ENCODE measurements at regions of chr17 and their contacts with region 1.

Region 1: DNA sequence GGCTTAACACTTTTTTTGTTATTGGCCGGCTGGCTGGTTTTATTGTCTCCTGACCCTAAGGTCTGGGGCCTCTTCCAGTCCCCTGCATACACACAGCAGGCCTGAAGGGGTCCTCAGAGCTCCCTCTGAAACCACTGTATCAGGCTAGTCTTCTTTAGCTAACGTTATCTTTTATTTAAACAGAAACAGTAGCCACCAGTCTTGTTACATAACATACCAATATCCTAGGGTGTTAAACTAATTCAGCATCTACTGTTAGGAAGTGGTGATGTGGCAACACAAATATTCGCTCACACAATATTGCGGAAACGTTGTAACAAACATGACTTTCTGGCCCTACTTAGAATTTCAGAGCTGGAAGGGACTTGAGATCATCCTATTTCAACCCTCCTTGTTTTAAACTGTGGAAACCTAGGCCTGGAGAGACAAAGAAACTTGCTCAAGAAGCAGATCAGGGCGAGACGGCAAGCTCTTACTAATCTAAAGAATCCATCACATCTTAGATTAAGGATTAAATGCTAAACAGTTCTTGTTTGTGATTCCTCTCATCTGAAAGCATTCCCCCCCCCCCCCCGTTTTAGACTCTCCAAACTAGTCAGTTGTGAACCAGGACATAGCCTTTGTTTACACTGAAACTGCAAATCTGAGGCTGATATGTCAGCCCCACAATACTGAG is 1.7 kb upstream of the YPEL2 start:
- DNase-seq: peak; percentile 49
- H3K4me3 ChIP-seq: no peak overlapping the region
- H3K27ac ChIP-seq: no peak overlapping the region
- H3K27me3 ChIP-seq: peaks cover 18% of the 10 kb centered on the region
- CTCF ChIP-seq: peak; percentile 96

Region 2: DNA sequence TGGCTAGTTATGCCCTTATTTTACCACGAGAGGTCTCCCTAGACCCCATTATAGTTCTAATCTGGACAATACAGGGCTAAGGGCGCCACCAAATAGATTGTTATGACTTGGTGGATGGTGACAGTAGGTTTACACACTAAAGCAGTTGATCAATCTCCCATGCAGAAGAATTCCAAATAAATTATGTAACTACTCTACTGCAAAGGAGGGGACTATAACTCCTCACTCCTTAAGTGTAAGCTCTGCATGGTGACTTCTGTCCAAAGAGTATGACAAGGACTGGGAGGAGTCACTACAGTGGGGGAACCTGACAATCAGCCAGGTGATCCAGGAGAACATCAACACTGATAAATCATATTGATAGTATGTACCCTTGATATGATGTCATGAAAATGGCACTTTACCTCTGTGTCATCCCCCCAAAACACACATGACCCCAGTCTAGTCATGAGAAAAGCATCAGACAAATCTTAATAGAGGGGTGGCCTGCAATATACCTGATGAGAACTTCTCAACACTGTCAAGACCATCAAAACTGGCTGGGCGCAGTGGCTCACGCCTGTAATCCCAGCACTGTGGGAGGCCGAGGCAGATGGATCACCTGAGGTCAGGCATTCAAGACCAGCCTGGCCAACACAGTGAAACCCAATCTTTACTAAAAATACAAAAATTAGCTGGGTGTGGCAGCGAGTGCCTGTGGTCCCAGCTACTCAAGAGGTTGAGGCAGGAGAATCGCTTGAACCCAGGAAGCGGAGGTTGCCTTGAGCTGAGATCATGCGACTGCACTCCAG is 18.5 kb before region 1 on chr17:
- CTCF ChIA-PET with region 1: interaction called, 17 read pairs
- POLR2A ChIA-PET with region 1: no interaction called
- DNase-seq: no peak
- H3K4me3 ChIP-seq: no peak overlapping the region
- H3K27ac ChIP-seq: no peak overlapping the region
- H3K27me3 ChIP-seq: peaks cover 2% of the 10 kb centered on the region
- CTCF ChIP-seq: peak; percentile 81

Region 3: DNA sequence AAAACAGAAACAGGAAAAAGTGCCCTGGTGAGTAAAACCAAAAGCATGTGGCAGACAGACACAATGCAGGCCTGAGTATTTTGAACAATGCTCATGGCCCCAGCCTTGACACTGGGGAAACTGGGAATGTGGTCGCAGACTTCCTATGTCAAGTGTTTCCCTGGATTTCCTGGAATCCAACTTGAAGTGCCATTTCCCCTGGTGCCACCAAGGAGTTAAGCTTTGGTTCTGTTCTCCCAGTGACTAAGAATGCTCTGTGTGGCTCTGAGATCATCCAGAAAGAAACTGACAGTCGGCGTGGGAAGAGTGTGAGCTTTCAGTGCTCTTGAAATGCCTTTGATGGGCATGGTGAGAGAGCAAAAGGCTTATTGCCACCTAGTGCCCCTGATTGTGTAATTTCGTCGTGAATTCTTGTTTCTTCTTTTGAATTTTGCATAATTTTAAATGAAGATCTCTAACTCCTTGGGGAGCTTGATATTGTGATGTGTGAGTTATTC is 97.7 kb after region 1 on chr17:
- CTCF ChIA-PET with region 1: interaction called, 43 read pairs
- POLR2A ChIA-PET with region 1: interaction called, 4 read pairs
- DNase-seq: no peak
- H3K4me3 ChIP-seq: no peak overlapping the region
- H3K27ac ChIP-seq: peak overlapping the region; percentile 59
- H3K27me3 ChIP-seq: no peaks in the 10 kb centered on the region
- CTCF ChIP-seq: no peak

Region 4: DNA sequence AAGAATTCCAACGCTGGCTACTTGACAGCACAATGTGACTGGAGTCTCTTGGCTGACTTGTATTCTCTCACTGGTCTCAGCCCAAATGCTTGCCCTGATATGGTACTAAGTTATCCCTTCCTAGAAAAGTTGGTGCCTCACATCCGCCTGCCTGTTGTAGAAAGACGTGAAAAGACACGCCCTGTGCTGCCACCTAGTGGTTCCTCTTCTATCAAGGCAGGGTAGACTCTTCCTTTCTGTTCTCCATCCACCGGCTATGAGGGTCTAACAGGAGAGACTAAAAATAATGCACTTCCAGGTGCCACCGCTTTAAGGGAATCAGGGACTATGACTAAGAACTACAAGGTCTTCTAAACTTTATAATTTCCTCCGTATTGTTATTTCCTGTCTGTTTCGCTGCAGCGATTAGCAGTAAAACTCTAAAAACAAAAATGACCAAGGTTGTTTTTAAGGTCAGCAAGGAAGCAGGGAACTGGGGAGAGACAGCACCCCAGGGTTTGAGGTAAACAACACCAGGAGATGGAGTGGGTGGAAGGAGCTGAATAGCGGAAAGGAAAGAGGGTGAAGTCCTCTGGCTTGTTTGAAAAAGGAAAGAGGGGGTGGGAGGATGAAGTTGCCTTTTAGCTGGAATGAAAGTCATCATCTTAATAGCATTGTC is 111.1 kb after region 1 on chr17:
- CTCF ChIA-PET with region 1: interaction called, 117 read pairs
- POLR2A ChIA-PET with region 1: interaction called, 9 read pairs
- DNase-seq: peak; percentile 78
- H3K4me3 ChIP-seq: no peak overlapping the region
- H3K27ac ChIP-seq: no peak overlapping the region
- H3K27me3 ChIP-seq: no peaks in the 10 kb centered on the region
- CTCF ChIP-seq: peak; percentile 90

Region 5: GRCh38 chr17:59561042-59561441 is 231.3 kb after region 1 on chr17:
- CTCF ChIA-PET with region 1: interaction called, 23 read pairs
- POLR2A ChIA-PET with region 1: no interaction called
- DNase-seq: no peak
- H3K4me3 ChIP-seq: no peak overlapping the region
- H3K27ac ChIP-seq: no peak overlapping the region
- H3K27me3 ChIP-seq: peaks cover 3% of the 10 kb centered on the region
- CTCF ChIP-seq: peak; percentile 42

Measured in AG04450 (cell line).